PC-9 (cell line): ENCODE measurements at regions of chr6 and their contacts with region 1.

Region 1: GRCh38 chr6:27687154-27688013 is 214.5 kb upstream of the ZNF184 start:
- DNase-seq: peak; percentile 69 to 87
- H3K4me3 ChIP-seq: peak overlapping the region; percentile 61
- H3K27ac ChIP-seq: peak overlapping the region; percentile 6; the same call in 1 of the 2 replicates
- H3K4me1 ChIP-seq: peaks cover 6% of the 10 kb centered on the region; the same call in 1 of the 2 replicates
- H3K27me3 ChIP-seq: no peaks in the 10 kb centered on the region
- CTCF ChIP-seq: peak; percentile 73; the same call in 1 of the 2 replicates

Region 2: GRCh38 chr6:27479319-27480182 is 207.8 kb before region 1 on chr6:
- CTCF ChIA-PET with region 1: no interaction called
- POLR2A ChIA-PET with region 1: no interaction called
- intact Hi-C with region 1: loop called (anchors 5 kb)
- DNase-seq: peak; percentile 84
- H3K4me3 ChIP-seq: peak overlapping the region; percentile 66
- H3K27ac ChIP-seq: peak overlapping the region; percentile 82
- H3K4me1 ChIP-seq: peaks cover 9% of the 10 kb centered on the region; the same call in 1 of the 2 replicates
- H3K27me3 ChIP-seq: no peaks in the 10 kb centered on the region
- CTCF ChIP-seq: no peak

Region 3: DNA sequence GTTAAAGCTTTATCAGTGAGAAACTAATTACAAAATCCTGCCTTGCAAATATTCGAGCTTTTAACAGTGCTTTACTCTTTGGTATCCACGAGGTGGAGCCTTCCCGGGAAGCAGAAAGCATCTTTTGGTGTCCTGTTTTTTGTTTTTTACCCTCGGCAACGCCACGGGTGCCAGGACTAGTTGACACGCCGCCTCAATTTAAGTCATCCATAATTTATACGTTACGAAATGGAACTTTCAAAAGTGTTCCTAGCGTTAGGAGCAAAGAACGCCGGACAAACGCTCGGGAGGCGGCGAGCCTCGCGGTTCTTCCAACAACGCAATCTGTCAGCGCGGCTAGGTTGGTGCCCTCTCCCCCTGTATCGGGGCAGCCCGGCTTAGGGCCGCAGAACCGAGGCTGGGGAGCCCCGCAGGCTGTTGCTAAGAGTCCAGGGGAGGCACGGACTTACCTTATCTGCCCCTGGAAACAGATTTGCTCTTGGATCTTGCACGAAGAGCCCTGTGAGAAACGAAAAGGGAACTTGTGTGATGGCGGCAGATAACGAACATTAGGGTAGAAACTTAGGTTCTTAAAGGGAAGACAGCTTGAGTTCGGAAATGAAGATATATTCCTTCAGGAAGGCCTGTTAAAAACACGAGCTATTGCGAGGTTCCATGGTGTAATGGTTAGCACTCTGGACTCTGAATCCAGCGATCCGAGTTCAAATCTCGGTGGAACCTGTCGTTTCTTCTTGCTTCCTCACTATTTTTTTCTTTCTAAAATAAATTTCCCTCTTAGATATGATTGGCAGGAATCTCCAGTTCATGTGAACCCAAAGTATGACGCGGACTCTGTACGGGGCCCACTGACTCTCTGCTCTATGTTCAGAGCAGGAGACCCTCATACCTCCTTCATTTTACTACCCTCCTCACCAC is 168.2 kb before region 1 on chr6:
- CTCF ChIA-PET with region 1: interaction called, 3 read pairs
- POLR2A ChIA-PET with region 1: no interaction called
- intact Hi-C with region 1: loop called (anchors 5 kb)
- DNase-seq: peak; percentile 72 to 85
- H3K4me3 ChIP-seq: peak overlapping the region; percentile 87
- H3K27ac ChIP-seq: peak overlapping the region; percentile 50
- H3K4me1 ChIP-seq: peaks cover 19% of the 10 kb centered on the region
- H3K27me3 ChIP-seq: no peaks in the 10 kb centered on the region
- CTCF ChIP-seq: peak; percentile 86

Region 4: GRCh38 chr6:27547157-27548075 is 140.0 kb before region 1 on chr6:
- CTCF ChIA-PET with region 1: no interaction called
- POLR2A ChIA-PET with region 1: interaction called, 5 read pairs
- intact Hi-C with region 1: loop called (anchors 5 kb)
- DNase-seq: peak; percentile 46 to 66
- H3K4me3 ChIP-seq: peak overlapping the region; percentile 64
- H3K27ac ChIP-seq: peak overlapping the region; percentile 37
- H3K4me1 ChIP-seq: no peaks in the 10 kb centered on the region; the same call in none of the 2 replicates
- H3K27me3 ChIP-seq: no peaks in the 10 kb centered on the region
- CTCF ChIP-seq: no peak